A673 (cell line): ENCODE measurements at regions of chr19 and their contacts with region 1.

Region 1: GRCh38 chr19:39765091-39766076 is 13.3 kb upstream of the LEUTX start:
- DNase-seq: peak; percentile 68
- H3K4me3 ChIP-seq: no peak overlapping the region
- H3K27ac ChIP-seq: no peak overlapping the region
- H3K4me1 ChIP-seq: no peaks in the 10 kb centered on the region
- H3K27me3 ChIP-seq: peaks cover 14% of the 10 kb centered on the region
- CTCF ChIP-seq: peak; percentile 89

Region 2: DNA sequence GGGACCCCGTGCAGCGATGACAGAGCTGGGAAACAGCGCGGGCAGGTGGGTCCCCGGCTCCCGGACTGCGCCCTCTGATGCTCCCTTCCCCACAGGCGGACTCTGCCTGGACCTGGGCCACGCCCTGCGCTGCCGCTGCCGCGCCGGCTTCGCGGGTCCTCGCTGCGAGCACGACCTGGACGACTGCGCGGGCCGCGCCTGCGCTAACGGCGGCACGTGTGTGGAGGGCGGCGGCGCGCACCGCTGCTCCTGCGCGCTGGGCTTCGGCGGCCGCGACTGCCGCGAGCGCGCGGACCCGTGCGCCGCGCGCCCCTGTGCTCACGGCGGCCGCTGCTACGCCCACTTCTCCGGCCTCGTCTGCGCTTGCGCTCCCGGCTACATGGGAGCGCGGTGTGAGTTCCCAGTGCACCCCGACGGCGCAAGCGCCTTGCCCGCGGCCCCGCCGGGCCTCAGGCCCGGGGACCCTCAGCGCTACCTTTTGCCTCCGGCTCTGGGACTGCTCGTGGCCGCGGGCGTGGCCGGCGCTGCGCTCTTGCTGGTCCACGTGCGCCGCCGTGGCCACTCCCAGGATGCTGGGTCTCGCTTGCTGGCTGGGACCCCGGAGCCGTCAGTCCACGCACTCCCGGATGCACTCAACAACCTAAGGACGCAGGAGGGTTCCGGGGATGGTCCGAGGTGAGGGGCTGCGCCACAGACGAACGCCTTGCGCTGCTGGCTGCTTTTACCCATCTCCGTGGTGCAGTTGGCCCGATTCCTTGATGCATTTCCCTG is 258.3 kb before region 1 on chr19:
- CTCF ChIA-PET with region 1: no interaction called
- POLR2A ChIA-PET with region 1: no interaction called
- intact Hi-C with region 1: no loop called
- DNase-seq: peak; percentile 85
- H3K4me3 ChIP-seq: peak overlapping the region; percentile 45
- H3K27ac ChIP-seq: no peak overlapping the region
- H3K4me1 ChIP-seq: peaks cover 5% of the 10 kb centered on the region
- H3K27me3 ChIP-seq: peaks cover 21% of the 10 kb centered on the region
- CTCF ChIP-seq: no peak

Region 3: GRCh38 chr19:39532233-39533002 is 233.0 kb before region 1 on chr19 and contains the start of gene EID2B:
- CTCF ChIA-PET with region 1: no interaction called
- POLR2A ChIA-PET with region 1: no interaction called
- intact Hi-C with region 1: no loop called
- DNase-seq: peak; percentile 97
- H3K4me3 ChIP-seq: peak within 1 kb of the TSS; percentile 81
- H3K27ac ChIP-seq: peak within 1 kb of the TSS; percentile 60
- H3K4me1 ChIP-seq: peaks cover 10% of the 10 kb centered on the region
- H3K27me3 ChIP-seq: no peaks in the 10 kb centered on the region
- CTCF ChIP-seq: peak; percentile 94
- total RNA-seq, gene EID2B: 3.4 and 4.2 TPM in 2 replicates

Region 4: GRCh38 chr19:39728040-39728439 is 37.3 kb before region 1 on chr19:
- CTCF ChIA-PET with region 1: no interaction called
- POLR2A ChIA-PET with region 1: no interaction called
- intact Hi-C with region 1: no loop called
- DNase-seq: no peak
- H3K4me3 ChIP-seq: no peak overlapping the region
- H3K27ac ChIP-seq: no peak overlapping the region
- H3K4me1 ChIP-seq: no peaks in the 10 kb centered on the region
- H3K27me3 ChIP-seq: peaks cover 17% of the 10 kb centered on the region
- CTCF ChIP-seq: no peak

Region 5: GRCh38 chr19:39746836-39747529 is 18.4 kb before region 1 on chr19:
- CTCF ChIA-PET with region 1: interaction called, 10 read pairs
- POLR2A ChIA-PET with region 1: no interaction called
- intact Hi-C with region 1: no loop called
- DNase-seq: no peak
- H3K4me3 ChIP-seq: no peak overlapping the region
- H3K27ac ChIP-seq: no peak overlapping the region
- H3K4me1 ChIP-seq: no peaks in the 10 kb centered on the region
- H3K27me3 ChIP-seq: peaks cover 69% of the 10 kb centered on the region
- CTCF ChIP-seq: no peak

Region 6: GRCh38 chr19:39843919-39844793 is 78.8 kb after region 1 on chr19:
- CTCF ChIA-PET with region 1: no interaction called
- POLR2A ChIA-PET with region 1: no interaction called
- intact Hi-C with region 1: loop called (anchors 2 kb)
- DNase-seq: peak; percentile 71
- H3K4me3 ChIP-seq: peak overlapping the region; percentile 93
- H3K27ac ChIP-seq: no peak overlapping the region
- H3K4me1 ChIP-seq: peaks cover 34% of the 10 kb centered on the region
- H3K27me3 ChIP-seq: no peaks in the 10 kb centered on the region
- CTCF ChIP-seq: peak; percentile 78

Region 7: DNA sequence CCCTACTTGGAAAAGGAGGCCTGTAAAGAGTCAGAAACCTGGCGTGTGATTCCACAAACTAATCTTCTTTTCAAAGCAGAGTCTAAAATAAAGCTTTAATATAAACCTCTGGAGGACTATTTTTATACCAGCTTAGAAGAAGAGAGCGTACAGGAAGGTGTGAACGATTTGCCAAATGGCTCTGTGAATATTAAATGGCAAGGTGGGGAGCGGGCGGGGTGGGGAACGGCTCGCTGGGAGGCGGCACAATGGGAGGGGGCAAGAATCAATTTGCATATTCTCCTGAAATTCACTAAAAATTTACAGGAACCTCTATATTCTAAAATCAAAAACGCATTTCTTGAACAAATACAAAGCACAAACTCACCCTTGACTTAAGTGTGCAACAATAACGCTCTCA is 289.7 kb after region 1 on chr19:
- CTCF ChIA-PET with region 1: interaction called, 10 read pairs
- POLR2A ChIA-PET with region 1: no interaction called
- intact Hi-C with region 1: no loop called
- DNase-seq: no peak
- H3K4me3 ChIP-seq: peak overlapping the region; percentile 82
- H3K27ac ChIP-seq: peak overlapping the region; percentile 73
- H3K4me1 ChIP-seq: peaks cover 7% of the 10 kb centered on the region
- H3K27me3 ChIP-seq: no peaks in the 10 kb centered on the region
- CTCF ChIP-seq: no peak